Activated CD4-positive, alpha-beta memory T cell treated with anti-CD3 and anti-CD28 coated beads for 36 hours (primary cell): ENCODE measurements at regions of chr19 and their contacts with region 1.

Region 1: GRCh38 chr19:35347171-35347929 is at the start of gene FFAR1:
- DNase-seq: peak; percentile 82
- H3K4me3 Mint-ChIP-seq: peak within 1 kb of the TSS; percentile 63
- H3K27ac Mint-ChIP-seq: peak within 1 kb of the TSS; percentile 96
- H3K4me1 Mint-ChIP-seq: peaks cover 41% of the 10 kb centered on the region
- H3K27me3 Mint-ChIP-seq: peaks cover 4% of the 10 kb centered on the region
- total RNA-seq, gene FFAR1: 0.12 TPM in 1 of 2 experiments, not detected in the other

Region 2: GRCh38 chr19:35204799-35205732 is 142.3 kb before region 1 on chr19:
- CTCF ChIA-PET with region 1: no interaction called
- POLR2A ChIA-PET with region 1: no interaction called
- intact Hi-C with region 1: loop called (anchors 2 kb)
- DNase-seq: peak; percentile 56
- H3K4me3 Mint-ChIP-seq: no peak overlapping the region
- H3K27ac Mint-ChIP-seq: peak overlapping the region; percentile 88
- H3K4me1 Mint-ChIP-seq: peaks cover 71% of the 10 kb centered on the region
- H3K27me3 Mint-ChIP-seq: no peaks in the 10 kb centered on the region

Region 3: DNA sequence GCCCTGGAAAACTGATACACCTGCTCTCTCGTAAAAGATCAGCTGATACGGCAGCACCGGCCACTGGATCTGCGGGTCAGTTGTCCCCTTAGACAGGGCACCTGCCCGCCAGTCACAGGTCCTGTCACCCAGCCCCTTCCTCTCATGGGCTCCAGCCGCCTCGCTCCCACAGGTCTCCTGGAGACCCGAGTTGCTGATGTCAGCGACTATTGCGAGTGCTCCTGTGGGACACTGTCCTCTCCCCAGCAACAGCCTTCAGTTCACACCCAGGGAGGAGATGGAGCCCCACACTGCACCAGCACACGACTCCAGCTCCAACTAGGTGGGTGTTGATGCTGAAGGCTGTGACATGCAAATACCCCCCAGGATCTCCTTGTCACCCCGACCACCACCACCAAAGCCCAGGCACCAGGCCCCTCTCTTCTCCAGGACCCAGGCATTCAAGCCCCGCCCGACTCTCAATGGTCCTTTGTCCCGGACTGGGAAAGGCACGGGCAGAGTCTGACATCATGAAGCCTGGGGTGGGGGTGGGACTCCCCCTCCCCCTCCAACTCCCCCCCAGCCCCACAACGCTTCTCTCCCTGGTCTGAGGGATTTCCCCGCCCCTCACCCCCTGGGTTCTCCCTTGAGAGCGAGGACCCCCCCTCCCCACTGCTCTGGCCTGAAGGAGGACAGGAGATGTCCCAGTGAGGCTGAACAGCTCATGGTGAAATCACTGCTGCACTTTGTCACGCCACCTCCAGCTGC is 56.8 kb before region 1 on chr19:
- CTCF ChIA-PET with region 1: no interaction called
- POLR2A ChIA-PET with region 1: no interaction called
- intact Hi-C with region 1: no loop called
- DNase-seq: no peak
- H3K4me3 Mint-ChIP-seq: no peak overlapping the region
- H3K27ac Mint-ChIP-seq: no peak overlapping the region
- H3K4me1 Mint-ChIP-seq: no peaks in the 10 kb centered on the region
- H3K27me3 Mint-ChIP-seq: no peaks in the 10 kb centered on the region

Region 4: DNA sequence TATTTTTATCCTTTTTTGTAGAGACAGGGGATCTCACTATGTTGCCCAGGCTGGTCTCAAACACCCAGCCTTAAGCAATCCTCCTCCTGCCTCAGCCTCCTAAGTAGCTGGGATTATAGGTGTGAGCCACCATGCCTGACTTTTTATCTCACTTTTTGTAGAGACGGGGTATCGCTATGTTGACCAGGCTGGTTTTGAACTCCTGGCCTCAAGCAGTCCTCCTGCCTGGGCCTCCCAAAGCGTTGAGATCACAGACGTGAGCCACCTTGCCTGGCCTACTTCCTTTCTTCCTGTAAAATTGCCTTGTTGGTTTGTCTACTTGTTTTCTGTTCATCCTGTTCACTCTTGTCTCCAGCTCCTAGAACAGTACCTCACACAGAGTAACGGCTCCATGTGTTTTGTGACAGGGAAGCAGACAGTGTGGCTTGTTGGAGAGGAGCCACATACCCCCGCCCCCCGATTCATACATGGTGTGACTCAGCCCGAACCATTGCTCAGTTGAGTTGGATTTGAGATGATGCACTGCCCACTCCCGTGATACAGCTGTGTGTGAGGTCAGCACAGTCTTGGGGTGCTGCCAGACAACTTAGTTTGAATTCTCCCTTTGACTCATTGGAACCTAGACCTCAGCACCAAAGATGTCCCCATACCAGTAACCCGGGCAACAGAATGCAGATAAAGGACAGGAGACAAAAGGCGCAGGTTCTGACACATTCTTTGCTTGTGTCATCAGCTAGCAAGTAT is 57.7 kb after region 1 on chr19:
- CTCF ChIA-PET with region 1: interaction called, 3 read pairs
- POLR2A ChIA-PET with region 1: interaction called, 4 read pairs
- intact Hi-C with region 1: loop called (anchors 1 kb)
- DNase-seq: peak; percentile 90
- H3K4me3 Mint-ChIP-seq: no peak overlapping the region
- H3K27ac Mint-ChIP-seq: peak overlapping the region; percentile 55
- H3K4me1 Mint-ChIP-seq: peaks cover 16% of the 10 kb centered on the region
- H3K27me3 Mint-ChIP-seq: no peaks in the 10 kb centered on the region

Region 5: GRCh38 chr19:35462476-35462953 is 115.2 kb after region 1 on chr19:
- CTCF ChIA-PET with region 1: interaction called, 101 read pairs
- POLR2A ChIA-PET with region 1: interaction called, 3 read pairs
- intact Hi-C with region 1: loop called (anchors 2 kb)
- DNase-seq: peak; percentile 56
- H3K4me3 Mint-ChIP-seq: peak overlapping the region; percentile 18
- H3K27ac Mint-ChIP-seq: peak overlapping the region; percentile 76
- H3K4me1 Mint-ChIP-seq: peaks cover 29% of the 10 kb centered on the region
- H3K27me3 Mint-ChIP-seq: peaks cover 2% of the 10 kb centered on the region